ENCODE measurements at regions of chr6 and their contacts with region 1.

Region 1: GRCh38 chr6:109595998-109596397 is 95.0 kb downstream of the AK9 start:
- DNase-seq: peak; percentile 26
- ATAC-seq: peak; percentile 67
- H3K4me3 ChIP-seq: no peak overlapping the region
- H3K27ac ChIP-seq: no peak overlapping the region
- H3K4me1 ChIP-seq: no peaks in the 10 kb centered on the region
- H3K27me3 ChIP-seq: no peaks in the 10 kb centered on the region
- CTCF ChIP-seq: peak; percentile 44
- EP300 ChIP-seq: no peak
- POLR2A ChIP-seq: no peak
- RAD21 ChIP-seq: no peak

Region 2: DNA sequence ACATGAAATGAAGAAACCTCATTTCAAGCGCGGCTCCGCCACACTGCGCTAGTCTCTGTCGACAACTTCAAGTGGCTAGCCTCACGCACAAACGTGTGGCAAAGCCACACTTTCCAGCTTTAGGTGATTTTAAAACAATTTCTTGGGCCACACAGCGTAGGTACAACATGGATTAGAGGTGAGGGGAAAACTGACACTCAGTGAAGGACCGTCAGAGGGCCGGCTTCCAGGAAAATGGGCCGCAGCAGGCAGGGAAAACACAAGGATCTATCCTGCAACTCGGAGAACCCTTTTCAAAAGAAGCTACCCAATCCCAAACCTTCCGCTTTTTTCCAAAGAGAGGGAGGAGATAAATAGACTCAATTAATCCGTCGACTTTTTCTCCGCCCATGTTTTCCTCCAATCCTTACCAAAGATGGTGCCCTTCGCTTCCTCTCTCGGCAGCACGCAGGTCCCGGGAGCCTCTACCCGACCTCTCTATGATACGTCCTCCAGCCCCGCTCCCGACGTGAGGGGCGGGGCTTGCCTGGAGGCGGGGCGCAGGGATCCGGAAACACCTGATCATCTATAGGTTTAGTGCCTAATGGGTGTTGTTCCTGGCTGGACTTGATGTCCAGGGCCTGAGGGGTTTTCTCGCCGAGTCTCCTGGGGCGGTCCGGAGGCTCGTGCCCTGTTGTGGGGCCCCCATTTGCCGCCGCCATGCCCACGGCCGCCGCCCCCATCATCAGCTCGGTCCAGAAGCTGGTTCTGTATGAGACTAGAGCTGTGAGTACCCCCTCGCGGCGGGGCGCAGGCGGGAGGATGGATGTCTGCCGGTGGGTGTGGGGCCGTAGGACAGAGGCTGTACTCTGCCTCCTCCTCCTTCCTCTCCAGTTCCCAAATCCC is 95.0 kb after region 1 on chr6 and contains the starts of genes AK9 and FIG4:
- CTCF ChIA-PET with region 1: no interaction called
- POLR2A ChIA-PET with region 1: no interaction called
- in situ Hi-C with region 1: no loop called
- intact Hi-C with region 1: loop called (anchors 1 kb)
- DNase-seq: peak; percentile 89
- ATAC-seq: peak; percentile 99
- H3K4me3 ChIP-seq: peak within 1 kb of the TSS; percentile 80 to 90 (median 86)
- H3K27ac ChIP-seq: peak within 1 kb of the TSS; percentile 75
- H3K4me1 ChIP-seq: peaks cover 21% of the 10 kb centered on the region
- H3K27me3 ChIP-seq: no peaks in the 10 kb centered on the region
- CTCF ChIP-seq: peak; percentile 75
- EP300 ChIP-seq: no peak
- POLR2A ChIP-seq: peak; percentile 57 to 67
- RAD21 ChIP-seq: no peak; the same call in 1 of the 2 replicates
- total RNA-seq, gene AK9: 4.8 and 7.1 TPM in 2 replicates
- total RNA-seq, gene FIG4: 7.9 and 10.3 TPM in 2 replicates